ENCODE measurements at regions of chr2 and their contacts with region 1.

Region 1: DNA sequence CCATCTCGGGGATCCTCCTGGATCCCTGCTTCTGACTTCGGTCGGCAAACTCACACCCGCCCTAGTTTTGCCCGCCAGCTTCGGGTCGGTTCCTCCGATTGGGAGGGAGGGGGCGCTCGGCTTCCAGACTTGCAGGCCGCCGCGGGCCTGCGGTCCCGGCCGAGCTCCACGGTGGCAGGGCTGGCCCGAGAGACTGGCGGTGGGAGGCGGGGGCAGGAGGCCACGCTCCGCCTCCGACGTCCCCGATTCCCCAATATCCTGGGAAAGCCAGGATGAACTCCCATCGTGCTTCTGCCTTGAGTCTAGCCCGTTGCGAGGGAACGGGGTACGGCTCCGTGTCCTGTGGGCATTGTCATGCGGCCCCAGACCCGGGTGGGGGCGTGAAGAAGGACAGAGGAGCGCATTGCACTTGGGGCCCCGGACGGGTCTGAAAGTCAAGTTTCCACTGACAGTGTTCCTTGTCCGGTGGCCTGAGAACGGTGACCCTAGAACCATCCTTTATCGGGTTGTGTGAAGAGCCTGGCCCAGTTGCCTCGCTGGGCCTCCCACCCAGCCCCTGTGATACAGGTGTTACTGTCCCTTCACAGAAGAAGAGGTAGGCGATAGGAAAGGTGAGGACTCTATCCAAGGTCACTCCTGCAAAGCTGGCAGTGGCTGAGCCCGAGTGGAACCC is 2.4 kb upstream of the INHBB start:
- DNase-seq: peak; percentile 17
- H3K4me3 ChIP-seq: peak overlapping the region; percentile 23
- CTCF ChIP-seq: peak; percentile 95

Region 2: GRCh38 chr2:120323214-120323613 is 20.4 kb before region 1 on chr2:
- CTCF ChIA-PET with region 1: interaction called, 44 read pairs
- POLR2A ChIA-PET with region 1: no interaction called
- DNase-seq: no peak
- H3K4me3 ChIP-seq: no peak overlapping the region
- CTCF ChIP-seq: no peak

Region 3: DNA sequence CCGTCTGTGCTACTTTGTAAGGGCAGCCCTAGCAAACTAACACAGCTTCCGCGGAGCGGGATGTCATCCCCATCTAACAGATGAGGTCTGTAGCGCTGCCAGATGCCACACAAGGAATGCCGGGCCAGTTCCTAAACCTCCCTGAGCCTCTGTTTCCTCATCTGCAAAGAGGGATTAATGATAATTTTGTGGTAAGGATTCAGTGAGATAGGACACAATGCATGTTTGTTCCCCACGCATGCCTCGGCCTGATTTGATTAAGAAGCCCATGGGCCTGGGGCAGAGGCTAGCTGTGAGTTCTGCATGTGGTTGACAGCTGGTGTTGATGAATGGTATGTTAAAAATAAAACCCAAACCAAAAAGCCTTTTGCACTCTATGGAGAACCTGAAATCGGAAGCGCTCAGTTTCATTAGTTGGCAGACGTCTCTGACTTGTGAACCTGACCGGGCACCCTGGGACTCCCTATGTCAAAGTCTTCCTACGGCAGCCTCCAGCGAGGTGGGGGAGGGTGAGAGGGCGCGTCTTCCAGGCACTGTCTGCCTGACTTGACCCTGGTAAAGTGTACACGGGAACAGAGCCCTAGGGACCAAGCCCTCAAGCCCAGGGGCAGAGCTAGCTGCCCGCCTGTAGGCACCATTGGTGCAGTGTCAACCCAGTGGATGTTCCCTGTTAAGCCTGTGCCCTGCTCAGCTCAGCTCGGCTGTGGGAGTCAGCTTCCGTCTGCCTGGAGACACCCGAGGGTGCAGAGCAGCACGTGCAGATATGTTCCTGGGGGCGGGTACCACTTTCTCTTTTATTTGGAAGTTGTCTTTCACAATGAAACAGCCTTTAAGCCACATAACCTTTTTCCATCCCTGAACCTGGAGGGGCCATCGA is 12.4 kb before region 1 on chr2:
- CTCF ChIA-PET with region 1: interaction called, 44 read pairs
- POLR2A ChIA-PET with region 1: no interaction called
- DNase-seq: no peak
- H3K4me3 ChIP-seq: no peak overlapping the region
- CTCF ChIP-seq: no peak

Region 4: DNA sequence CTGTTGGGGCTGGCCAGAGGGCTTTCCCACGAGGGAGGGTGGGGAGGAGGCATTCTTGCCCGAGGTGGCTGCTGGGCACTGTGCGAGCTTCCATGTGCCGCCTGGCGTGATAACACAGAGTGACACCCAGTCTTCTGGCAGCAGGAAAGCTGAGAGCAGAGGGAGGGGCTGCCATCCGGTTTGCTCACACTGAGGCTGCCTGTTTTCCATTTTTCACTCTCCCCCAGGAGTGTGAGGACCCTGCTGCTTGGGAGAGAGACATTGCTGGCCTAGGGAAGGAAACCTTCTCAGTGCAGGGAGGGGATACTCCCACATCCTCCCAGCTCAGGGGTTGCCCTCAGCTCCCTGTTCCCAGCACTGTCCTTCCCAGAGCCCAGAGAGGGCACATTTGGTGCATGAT is 75.5 kb after region 1 on chr2:
- CTCF ChIA-PET with region 1: no interaction called
- POLR2A ChIA-PET with region 1: no interaction called
- DNase-seq: no peak
- H3K4me3 ChIP-seq: no peak overlapping the region
- CTCF ChIP-seq: no peak

Region 5: DNA sequence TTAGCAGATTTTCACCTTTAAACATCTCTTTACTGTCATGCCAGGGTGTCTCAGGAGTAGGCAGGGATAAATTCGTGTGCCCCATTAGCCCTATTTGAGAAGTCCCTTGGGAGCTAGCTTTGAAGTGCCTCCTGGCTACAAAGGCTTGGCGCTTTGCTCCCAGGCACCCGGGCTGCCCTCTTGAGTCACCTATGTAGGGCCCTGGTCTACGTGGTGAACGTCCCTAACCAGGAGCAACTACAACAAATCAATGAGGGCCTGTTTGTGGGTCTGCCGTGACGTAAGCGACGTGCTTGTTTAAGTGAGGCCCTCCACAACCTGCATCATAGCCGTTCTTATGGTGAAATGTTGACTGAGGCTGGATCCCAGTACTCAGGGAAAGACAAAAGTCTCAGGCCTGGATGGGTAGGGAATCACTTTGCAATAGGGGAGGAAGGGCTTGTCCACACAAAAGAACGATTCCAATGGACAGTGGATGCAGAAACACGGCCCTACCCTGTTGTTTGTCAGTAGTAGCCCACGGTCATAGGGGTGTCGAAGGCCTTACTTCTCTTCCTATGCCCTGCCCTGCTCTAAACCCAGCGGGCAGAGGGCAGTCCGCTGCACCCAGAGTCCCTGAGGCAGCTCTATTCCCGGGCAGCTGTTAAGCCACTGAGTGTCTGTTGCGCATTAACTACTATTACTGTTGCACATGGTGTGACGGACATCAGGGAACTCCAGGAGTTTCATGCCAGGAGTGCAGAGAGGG is 96.2 kb after region 1 on chr2:
- CTCF ChIA-PET with region 1: interaction called, 10 read pairs
- POLR2A ChIA-PET with region 1: no interaction called
- DNase-seq: no peak
- H3K4me3 ChIP-seq: no peak overlapping the region
- CTCF ChIP-seq: no peak

Region 6: DNA sequence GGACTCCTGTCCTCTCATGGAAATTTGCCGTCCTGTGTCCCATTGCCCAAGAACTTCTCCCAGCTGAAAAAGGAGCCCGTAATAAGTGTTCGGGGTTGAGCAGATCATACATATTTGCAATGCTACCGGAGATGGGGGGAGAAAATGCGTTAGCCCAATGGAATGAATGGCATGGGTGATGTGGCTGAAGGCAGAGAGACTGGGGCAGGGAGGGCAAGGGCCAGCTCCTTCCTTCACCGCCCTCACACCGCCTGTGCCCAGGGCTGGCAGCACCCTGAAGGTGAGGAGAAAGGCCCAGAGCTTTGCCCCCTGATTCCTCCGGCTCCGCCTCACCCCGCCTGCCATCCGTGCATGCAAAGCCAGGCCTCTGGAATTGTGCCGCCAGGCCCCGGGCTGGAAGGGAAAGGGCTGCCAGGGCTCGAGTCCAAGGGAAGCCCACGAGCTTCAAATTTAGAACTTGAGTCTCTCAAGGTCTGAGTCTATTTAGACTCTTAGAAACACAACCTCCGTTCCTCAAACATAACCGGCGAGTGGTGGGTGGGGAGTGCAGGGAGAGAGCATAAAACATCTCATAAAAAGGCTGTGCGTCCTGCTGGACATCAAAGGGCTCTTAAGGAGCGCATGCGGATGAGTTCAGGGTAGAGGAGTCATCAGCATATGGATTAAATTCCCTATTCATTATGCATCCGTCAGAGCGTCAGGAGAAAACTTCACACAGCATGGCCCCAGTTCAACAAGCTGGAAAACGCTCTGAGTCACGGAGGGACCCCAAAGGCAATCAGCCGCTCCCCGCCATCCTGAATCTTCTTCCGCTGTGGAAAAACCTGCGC is 270.4 kb after region 1 on chr2:
- CTCF ChIA-PET with region 1: interaction called, 11 read pairs
- POLR2A ChIA-PET with region 1: interaction called, 3 read pairs
- DNase-seq: peak; percentile 91
- H3K4me3 ChIP-seq: peak overlapping the region; percentile 37
- CTCF ChIP-seq: no peak

Region 7: DNA sequence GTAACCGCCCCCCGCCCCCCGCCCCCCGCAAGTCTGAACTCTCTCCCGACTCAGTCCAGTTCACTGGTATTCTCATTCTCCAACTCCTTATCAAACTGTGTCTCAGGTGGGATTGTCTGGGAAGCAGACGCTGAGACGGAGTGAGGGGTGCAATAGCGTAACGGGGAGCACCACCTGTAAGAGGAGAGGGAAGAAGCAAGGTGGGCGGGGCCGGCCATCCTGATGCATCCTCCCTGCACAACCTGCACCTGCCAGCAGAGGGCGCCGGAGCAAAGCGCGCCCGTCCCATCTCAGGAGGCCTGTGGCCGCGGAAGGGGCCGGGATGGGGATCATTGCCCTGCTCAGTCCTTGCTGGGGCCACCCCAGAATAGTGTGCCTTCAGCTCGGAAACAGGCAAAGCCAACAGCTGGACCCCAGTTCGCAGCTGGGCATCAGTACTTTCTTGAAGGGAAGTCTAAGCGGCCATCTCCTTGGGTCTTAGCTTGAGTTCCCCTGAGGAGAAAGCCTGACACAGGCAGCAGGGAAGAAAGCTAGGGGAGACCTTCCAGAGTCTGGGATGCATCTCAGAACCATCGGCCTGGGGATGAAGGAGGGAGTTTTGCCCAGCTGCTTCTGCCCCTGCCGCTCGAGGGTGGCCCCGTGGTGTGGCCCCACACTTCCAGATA is 733.4 kb after region 1 on chr2:
- CTCF ChIA-PET with region 1: interaction called, 14 read pairs
- POLR2A ChIA-PET with region 1: interaction called, 4 read pairs
- DNase-seq: no peak
- H3K4me3 ChIP-seq: no peak overlapping the region
- CTCF ChIP-seq: peak; percentile 98

Measured in AG04449 (cell line).